Vagina (tissue), 2 donors: ENCODE measurements at regions of chr7 and their contacts with region 1.

Region 1: DNA sequence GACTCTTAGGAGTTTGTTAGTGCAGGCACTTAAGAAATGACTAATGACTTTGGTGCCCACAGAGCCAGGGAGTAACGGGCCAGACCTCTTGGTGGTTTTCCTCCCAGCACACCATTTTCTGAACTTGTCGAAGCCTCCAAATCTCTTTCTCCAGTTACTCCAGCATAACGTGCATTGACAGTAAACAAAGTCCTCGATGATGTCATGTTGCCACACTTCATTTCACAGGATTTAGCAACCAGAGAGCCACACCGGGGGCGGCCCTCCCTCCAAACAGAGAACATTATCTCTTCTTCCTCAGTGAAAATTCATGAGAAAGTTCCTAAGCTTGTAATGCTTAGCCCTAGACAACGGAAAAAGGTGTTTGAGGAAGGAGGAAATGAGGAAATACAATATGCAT is 4.0 kb upstream of the SVOPL start:
- DNase-seq: no peak
- H3K4me3 ChIP-seq: no peak overlapping the region
- H3K27ac ChIP-seq: no peak overlapping the region
- H3K4me1 ChIP-seq: no peaks in the 10 kb centered on the region
- H3K27me3 ChIP-seq: no peaks in the 10 kb centered on the region
- CTCF ChIP-seq: no peak
- POLR2A ChIP-seq: no peak

Region 2: DNA sequence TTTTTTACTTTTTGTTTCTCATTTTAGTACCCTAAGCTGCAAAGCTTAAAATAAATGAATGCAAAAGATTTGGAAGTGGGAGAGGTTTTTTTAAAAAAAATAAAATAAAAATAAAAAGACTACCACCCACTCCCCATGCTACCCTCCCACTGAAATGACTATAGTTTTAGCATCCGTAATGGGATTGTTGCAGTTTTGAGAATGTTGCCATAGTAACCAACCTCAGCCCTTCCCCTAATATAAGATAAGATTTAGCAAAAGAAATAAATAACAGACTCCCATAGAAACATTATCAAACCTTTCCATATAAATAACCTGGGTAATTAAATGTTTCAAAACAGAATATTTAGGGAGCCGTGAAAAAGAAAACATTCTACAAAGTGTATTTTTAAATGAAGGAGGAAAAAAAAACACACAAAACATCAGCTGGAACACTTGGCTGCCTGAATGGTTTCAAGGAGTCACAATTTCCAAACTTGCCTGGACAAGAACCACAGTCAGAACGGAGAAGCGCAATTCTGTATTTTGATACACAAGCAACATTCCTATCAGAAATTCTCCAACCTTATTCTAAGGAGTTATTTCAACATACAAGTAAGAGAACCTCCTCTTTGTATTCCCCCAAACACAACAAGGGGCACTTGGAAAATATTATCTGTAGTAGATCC is 915.8 kb before region 1 on chr7:
- intact Hi-C with region 1: loop called (anchors 5 kb)
- DNase-seq: no peak
- H3K4me3 ChIP-seq: no peak overlapping the region
- H3K27ac ChIP-seq: no peak overlapping the region
- H3K4me1 ChIP-seq: no peaks in the 10 kb centered on the region
- H3K27me3 ChIP-seq: no peaks in the 10 kb centered on the region
- CTCF ChIP-seq: no peak
- POLR2A ChIP-seq: no peak

Region 3: DNA sequence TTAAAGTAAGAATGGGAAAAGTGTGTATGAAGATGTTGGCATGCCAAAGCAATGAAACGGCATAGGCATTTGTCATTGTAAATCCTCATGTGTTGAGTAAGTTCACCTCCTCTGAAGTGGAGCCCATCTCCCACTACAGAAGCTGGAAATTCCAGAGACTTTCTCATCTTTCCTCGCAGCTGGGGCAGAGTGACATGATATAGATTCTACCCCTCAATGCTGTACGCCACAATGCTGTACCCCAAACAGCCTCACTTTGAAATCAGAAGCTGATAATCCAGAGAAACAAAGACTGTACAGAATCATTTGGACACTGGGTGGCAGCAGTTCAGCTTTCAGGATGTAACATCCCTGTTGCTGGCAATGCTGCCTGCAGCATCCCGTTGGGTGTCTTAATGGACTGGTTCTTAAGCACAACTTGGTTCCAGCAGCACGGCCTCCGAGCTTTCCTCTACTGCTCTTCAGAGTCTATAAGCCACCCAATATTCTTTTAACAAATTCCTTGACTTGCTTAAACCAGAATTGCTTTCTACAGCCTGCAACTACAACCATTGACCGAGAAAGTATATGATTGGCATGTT is 311.9 kb after region 1 on chr7:
- intact Hi-C with region 1: no loop called
- DNase-seq: peak in 1 of 2 donors; percentile 28
- H3K4me3 ChIP-seq: no peak overlapping the region
- H3K27ac ChIP-seq: no peak overlapping the region
- H3K4me1 ChIP-seq: no peaks in the 10 kb centered on the region
- H3K27me3 ChIP-seq: no peaks in the 10 kb centered on the region
- CTCF ChIP-seq: peak; percentile 29 to 48 (median 35)
- POLR2A ChIP-seq: no peak